Naive thymus-derived CD4-positive, alpha-beta T cell (primary cell): ENCODE measurements at regions of chr4 and their contacts with region 1.

Region 1: GRCh38 chr4:54233277-54233696 is 4.2 kb downstream of the PDGFRA start:
- DNase-seq: peak; percentile 37 to 82 (median 65)
- ATAC-seq: peak; percentile 88
- H3K4me3 ChIP-seq: peak overlapping the region; percentile 50
- H3K4me3 Mint-ChIP-seq: peak overlapping the region; percentile 52 to 87 (median 84)
- H3K27ac ChIP-seq: no peak overlapping the region
- H3K27ac Mint-ChIP-seq: no peak overlapping the region
- H3K4me1 ChIP-seq: peaks cover 0 to 7% of the 10 kb centered on the region in 2 donors
- H3K4me1 Mint-ChIP-seq: peaks cover 11 to 32% (median 21%) of the 10 kb centered on the region in 7 donors
- H3K27me3 ChIP-seq: peaks cover 0 to 4% of the 10 kb centered on the region in 2 donors
- H3K27me3 Mint-ChIP-seq: peaks cover 27 to 70% (median 63%) of the 10 kb centered on the region in 5 donors

Region 2: DNA sequence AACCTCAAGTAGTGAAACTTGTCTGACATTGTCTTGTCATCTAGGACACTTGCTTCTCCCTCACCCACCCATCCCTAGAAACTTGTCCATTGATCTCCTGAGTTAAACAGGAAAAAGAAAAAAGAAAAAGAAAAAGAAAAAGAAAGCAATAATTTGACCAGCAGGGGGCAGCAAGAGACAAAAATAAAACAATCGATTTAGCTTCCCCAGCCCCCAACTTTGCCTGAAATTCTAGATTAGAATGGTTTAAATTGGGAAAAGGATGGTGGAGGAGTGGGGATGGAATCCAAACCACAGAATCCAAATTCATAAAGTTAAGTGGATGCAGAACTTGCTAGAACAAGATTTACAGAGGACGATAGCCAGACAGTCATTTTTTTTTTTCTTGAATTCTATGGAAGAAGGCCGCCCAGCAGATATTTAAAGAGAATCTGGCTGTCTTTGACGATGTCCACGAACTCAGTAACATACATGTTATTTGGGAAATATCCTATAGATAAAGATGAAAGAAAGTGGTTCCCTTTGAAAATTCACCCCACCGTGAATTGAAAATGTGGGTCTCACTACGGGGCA is 1857.1 kb before region 1 on chr4:
- CTCF ChIA-PET with region 1: no interaction called
- POLR2A ChIA-PET with region 1: no interaction called
- intact Hi-C with region 1: loop called (anchors 1 kb)
- DNase-seq: peak in 5 of 9 donors; percentile 17 to 25 (median 21)
- ATAC-seq: no peak
- H3K4me3 ChIP-seq: no peak overlapping the region
- H3K4me3 Mint-ChIP-seq: no peak overlapping the region
- H3K27ac ChIP-seq: no peak overlapping the region
- H3K27ac Mint-ChIP-seq: no peak overlapping the region
- H3K4me1 ChIP-seq: no peaks in the 10 kb centered on the region
- H3K4me1 Mint-ChIP-seq: peaks cover 0 to 3% (median 0%) of the 10 kb centered on the region in 7 donors
- H3K27me3 ChIP-seq: peaks cover 0 to 5% of the 10 kb centered on the region in 2 donors
- H3K27me3 Mint-ChIP-seq: peaks cover 8 to 34% (median 15%) of the 10 kb centered on the region in 5 donors

Region 3: DNA sequence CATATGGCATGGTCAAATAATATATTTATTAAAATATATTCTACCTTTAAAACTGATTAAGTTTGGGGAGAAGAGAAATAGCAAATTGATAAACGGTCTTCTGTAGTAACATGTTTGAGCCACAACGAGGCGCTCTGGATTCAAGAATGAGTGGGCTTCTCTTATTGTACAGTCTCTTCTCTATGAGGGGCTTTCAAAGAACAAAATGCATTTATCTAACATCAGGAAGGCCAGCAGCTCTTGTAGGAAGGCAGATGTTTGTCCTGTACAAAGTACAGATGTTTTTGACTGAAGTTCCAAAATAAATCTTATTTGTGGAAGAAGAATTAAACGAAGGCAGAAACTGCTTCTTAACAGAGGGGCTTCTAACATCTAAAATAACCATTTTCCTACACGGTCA is 1217.6 kb before region 1 on chr4:
- CTCF ChIA-PET with region 1: interaction called, 4 read pairs
- POLR2A ChIA-PET with region 1: no interaction called
- intact Hi-C with region 1: loop called (anchors 5 to 10 kb)
- DNase-seq: no peak
- ATAC-seq: no peak
- H3K4me3 ChIP-seq: no peak overlapping the region
- H3K4me3 Mint-ChIP-seq: no peak overlapping the region
- H3K27ac ChIP-seq: no peak overlapping the region
- H3K27ac Mint-ChIP-seq: no peak overlapping the region
- H3K4me1 ChIP-seq: peaks cover 0 to 27% of the 10 kb centered on the region in 2 donors
- H3K4me1 Mint-ChIP-seq: peaks cover 15 to 43% (median 37%) of the 10 kb centered on the region in 7 donors
- H3K27me3 ChIP-seq: no peaks in the 10 kb centered on the region
- H3K27me3 Mint-ChIP-seq: no peaks in the 10 kb centered on the region

Region 4: DNA sequence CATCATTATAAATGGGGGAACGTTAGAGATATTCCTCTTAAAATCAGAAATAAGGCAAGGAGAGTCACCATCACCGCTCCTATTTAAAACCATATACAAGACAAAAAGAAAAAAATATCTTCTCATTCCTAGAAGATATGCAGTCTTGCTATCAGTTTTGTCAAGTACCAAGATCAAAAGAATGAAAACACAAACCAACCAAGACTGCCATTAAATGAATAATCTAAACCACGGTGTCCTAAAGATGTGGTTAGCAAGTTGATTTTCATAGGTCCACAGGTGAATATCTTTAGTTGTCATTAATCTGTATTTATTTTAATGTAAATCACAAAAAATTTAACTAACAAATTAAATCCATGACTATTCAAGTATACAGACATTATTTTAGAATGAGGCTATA is 906.8 kb before region 1 on chr4:
- CTCF ChIA-PET with region 1: no interaction called
- POLR2A ChIA-PET with region 1: no interaction called
- intact Hi-C with region 1: no loop called
- DNase-seq: no peak
- ATAC-seq: no peak
- H3K4me3 ChIP-seq: no peak overlapping the region
- H3K4me3 Mint-ChIP-seq: peak overlapping the region in 1 of 10 donors; percentile 15
- H3K27ac ChIP-seq: no peak overlapping the region
- H3K27ac Mint-ChIP-seq: peak overlapping the region in 1 of 9 donors; percentile 21
- H3K4me1 ChIP-seq: no peaks in the 10 kb centered on the region
- H3K4me1 Mint-ChIP-seq: peaks cover 4 to 36% (median 25%) of the 10 kb centered on the region in 7 donors
- H3K27me3 ChIP-seq: no peaks in the 10 kb centered on the region
- H3K27me3 Mint-ChIP-seq: no peaks in the 10 kb centered on the region

Region 5: GRCh38 chr4:53365486-53366300 is 867.6 kb before region 1 on chr4 and contains the start of gene SCFD2:
- CTCF ChIA-PET with region 1: no interaction called
- POLR2A ChIA-PET with region 1: no interaction called
- intact Hi-C with region 1: loop called in 1 of 2 experiments (anchors 5 kb)
- DNase-seq: peak; percentile 86 to 97 (median 94)
- ATAC-seq: peak; percentile 99
- H3K4me3 ChIP-seq: peak within 1 kb of the TSS; percentile 72
- H3K4me3 Mint-ChIP-seq: peak within 1 kb of the TSS; percentile 92 to 99 (median 96)
- H3K27ac ChIP-seq: peak within 1 kb of the TSS; percentile 85
- H3K27ac Mint-ChIP-seq: peak within 1 kb of the TSS; percentile 95 to 99 (median 96)
- H3K4me1 ChIP-seq: peaks cover 7 to 23% of the 10 kb centered on the region in 2 donors
- H3K4me1 Mint-ChIP-seq: peaks cover 32 to 64% (median 50%) of the 10 kb centered on the region in 7 donors
- H3K27me3 ChIP-seq: no peaks in the 10 kb centered on the region
- H3K27me3 Mint-ChIP-seq: peaks cover 0 to 20% (median 3%) of the 10 kb centered on the region in 5 donors
- total RNA-seq, gene SCFD2: 13.4 to 32.8 (median 28.0) TPM

Region 6: GRCh38 chr4:53702334-53703266 is 530.7 kb before region 1 on chr4:
- CTCF ChIA-PET with region 1: interaction called, 4 read pairs
- POLR2A ChIA-PET with region 1: no interaction called
- intact Hi-C with region 1: loop called (anchors 2 to 10 kb)
- DNase-seq: peak in 1 of 9 donors; percentile 0
- ATAC-seq: peak; percentile 63
- H3K4me3 ChIP-seq: no peak overlapping the region
- H3K4me3 Mint-ChIP-seq: peak overlapping the region; percentile 35 to 73 (median 48)
- H3K27ac ChIP-seq: no peak overlapping the region
- H3K27ac Mint-ChIP-seq: peak overlapping the region in 2 of 9 donors; percentile 21 to 81
- H3K4me1 ChIP-seq: no peaks in the 10 kb centered on the region
- H3K4me1 Mint-ChIP-seq: peaks cover 6 to 16% (median 11%) of the 10 kb centered on the region in 7 donors
- H3K27me3 ChIP-seq: peaks cover 0 to 4% of the 10 kb centered on the region in 2 donors
- H3K27me3 Mint-ChIP-seq: peaks cover 2 to 31% (median 25%) of the 10 kb centered on the region in 5 donors

Region 7: DNA sequence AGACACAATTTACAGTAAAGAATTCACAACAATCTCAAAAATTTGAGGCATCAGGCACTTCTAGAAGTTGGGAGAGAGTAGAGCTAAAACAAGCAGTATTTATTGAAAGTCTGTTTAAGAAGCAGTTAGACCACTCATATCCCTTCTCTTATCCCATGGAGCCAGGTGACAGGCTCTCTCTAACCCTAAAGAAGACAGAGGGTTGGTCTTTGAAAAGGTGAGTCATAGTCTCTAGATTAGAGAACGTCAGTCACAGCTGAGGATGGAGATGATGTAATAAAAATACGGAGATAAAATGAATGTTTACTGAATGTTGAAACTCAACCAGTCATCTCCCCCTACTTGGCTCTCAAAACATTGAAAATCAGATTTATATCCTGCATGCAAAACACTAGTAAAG is 392.6 kb before region 1 on chr4:
- CTCF ChIA-PET with region 1: no interaction called
- POLR2A ChIA-PET with region 1: no interaction called
- intact Hi-C with region 1: no loop called
- DNase-seq: no peak
- ATAC-seq: no peak
- H3K4me3 ChIP-seq: no peak overlapping the region
- H3K4me3 Mint-ChIP-seq: no peak overlapping the region
- H3K27ac ChIP-seq: no peak overlapping the region
- H3K27ac Mint-ChIP-seq: no peak overlapping the region
- H3K4me1 ChIP-seq: no peaks in the 10 kb centered on the region
- H3K4me1 Mint-ChIP-seq: no peaks in the 10 kb centered on the region
- H3K27me3 ChIP-seq: no peaks in the 10 kb centered on the region
- H3K27me3 Mint-ChIP-seq: peaks cover 0 to 22% (median 13%) of the 10 kb centered on the region in 5 donors

Region 8: DNA sequence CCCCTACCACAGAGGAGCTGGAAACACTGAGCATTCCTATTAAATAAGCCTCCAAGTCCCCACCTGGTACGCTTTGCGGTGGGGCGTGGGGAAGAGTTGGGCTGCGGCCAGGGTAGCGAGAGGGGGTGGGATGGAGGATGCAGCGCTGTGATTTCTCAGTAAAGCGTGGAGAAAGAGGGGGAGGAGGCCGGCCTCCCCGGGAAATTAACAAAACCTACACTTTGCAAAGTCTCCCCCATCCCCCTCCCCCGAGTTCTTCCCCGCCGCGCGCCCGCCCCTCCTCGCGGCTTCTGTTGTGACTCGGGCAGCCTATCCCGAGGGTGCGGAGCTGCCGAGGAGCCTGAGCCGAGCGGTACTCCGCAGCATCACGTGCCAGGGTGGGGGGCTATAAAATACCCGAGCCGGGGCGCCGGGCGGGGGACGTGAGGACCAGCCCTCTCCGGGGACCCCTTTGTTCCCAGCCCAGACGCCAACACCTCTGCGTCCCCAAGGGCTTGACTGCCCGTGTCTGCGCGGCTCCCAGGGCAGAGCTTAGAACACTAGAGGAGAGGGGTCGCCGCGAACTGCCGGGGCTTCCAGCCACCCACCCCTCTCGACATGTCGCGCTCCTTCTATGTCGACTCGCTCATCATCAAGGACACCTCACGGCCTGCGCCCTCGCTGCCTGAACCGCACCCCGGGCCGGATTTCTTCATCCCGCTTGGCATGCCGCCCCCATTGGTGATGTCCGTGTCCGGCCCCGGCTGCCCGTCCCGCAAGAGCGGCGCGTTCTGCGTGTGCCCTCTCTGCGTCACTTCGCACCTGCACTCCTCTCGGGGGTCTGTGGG is 133.3 kb before region 1 on chr4 and contains the start of gene GSX2:
- CTCF ChIA-PET with region 1: no interaction called
- POLR2A ChIA-PET with region 1: no interaction called
- intact Hi-C with region 1: loop called in 1 of 2 experiments (anchors 2 kb)
- DNase-seq: no peak
- ATAC-seq: peak; percentile 17
- H3K4me3 ChIP-seq: peak within 1 kb of the TSS; percentile 38
- H3K4me3 Mint-ChIP-seq: peak within 1 kb of the TSS; percentile 46 to 81 (median 72)
- H3K27ac ChIP-seq: no peak within 1 kb of the TSS
- H3K27ac Mint-ChIP-seq: peak within 1 kb of the TSS in 2 of 9 donors; percentile 38 to 56
- H3K4me1 ChIP-seq: peaks cover 20 to 24% of the 10 kb centered on the region in 2 donors
- H3K4me1 Mint-ChIP-seq: peaks cover 19 to 50% (median 33%) of the 10 kb centered on the region in 7 donors
- H3K27me3 ChIP-seq: peaks cover 22 to 46% of the 10 kb centered on the region in 2 donors
- H3K27me3 Mint-ChIP-seq: peaks cover 79 to 93% (median 88%) of the 10 kb centered on the region in 5 donors
- total RNA-seq, gene GSX2: not detected